Panc1 (cell line): ENCODE measurements at regions of chr9 and their contacts with region 1.

Region 1: GRCh38 chr9:109253703-109254284 is 67.1 kb downstream of the EPB41L4B start:
- DNase-seq: peak; percentile 69
- ATAC-seq: peak; percentile 82
- H3K4me3 ChIP-seq: no peak overlapping the region
- H3K27ac ChIP-seq: peak overlapping the region; percentile 93
- H3K4me1 ChIP-seq: peaks cover 64% of the 10 kb centered on the region
- H3K27me3 ChIP-seq: no peaks in the 10 kb centered on the region
- CTCF ChIP-seq: peak; percentile 32; the same call in 1 of the 2 replicates

Region 2: GRCh38 chr9:109108318-109108717 is 145.5 kb before region 1 on chr9:
- CTCF ChIA-PET with region 1: no interaction called
- POLR2A ChIA-PET with region 1: interaction called, 14 read pairs
- in situ Hi-C with region 1: no loop called
- intact Hi-C with region 1: no loop called
- DNase-seq: no peak
- ATAC-seq: peak; percentile 49; the same call in 1 of the 2 replicates
- H3K4me3 ChIP-seq: peak overlapping the region; percentile 14 to 29
- H3K27ac ChIP-seq: peak overlapping the region; percentile 95
- H3K4me1 ChIP-seq: peaks cover 29% of the 10 kb centered on the region
- H3K27me3 ChIP-seq: no peaks in the 10 kb centered on the region
- CTCF ChIP-seq: no peak

Region 3: DNA sequence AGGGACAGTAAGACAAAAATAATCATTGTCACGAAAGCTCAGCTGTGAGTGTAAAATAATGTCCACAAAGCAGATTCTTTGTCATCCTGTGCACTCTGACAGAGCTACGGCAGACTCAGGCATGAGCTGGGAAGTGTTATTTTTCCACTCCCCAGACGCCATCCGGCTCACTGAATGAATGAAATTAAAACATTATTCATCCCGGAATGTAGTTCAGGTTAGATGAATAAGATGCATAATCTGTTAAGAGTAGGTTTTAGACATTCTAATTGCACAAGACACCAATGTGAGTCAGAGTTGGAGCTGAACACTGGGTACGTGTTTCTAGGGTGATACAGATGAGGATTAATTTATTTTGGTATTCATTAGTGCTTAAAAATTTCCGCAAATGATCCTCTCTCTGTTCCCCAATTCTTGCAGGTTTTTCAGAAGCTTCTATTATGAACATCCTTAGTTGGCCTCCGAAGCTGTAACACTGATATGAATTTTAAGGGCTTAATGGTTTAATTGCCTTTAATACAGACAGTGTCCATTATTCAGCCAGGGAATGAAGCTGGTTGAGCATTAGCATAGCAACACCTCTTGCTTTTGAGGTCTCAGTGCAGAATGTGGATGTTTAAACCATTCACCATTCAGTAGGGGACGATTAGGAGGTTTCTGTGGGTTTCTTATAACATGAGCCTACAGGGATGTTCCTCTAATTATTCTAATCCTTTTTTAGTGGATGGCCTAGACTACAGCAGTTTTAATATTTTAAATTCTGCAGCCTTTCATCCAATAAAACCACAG is 21.2 kb before region 1 on chr9:
- CTCF ChIA-PET with region 1: no interaction called
- POLR2A ChIA-PET with region 1: no interaction called
- in situ Hi-C with region 1: no loop called
- intact Hi-C with region 1: no loop called
- DNase-seq: no peak
- ATAC-seq: no peak
- H3K4me3 ChIP-seq: no peak overlapping the region
- H3K27ac ChIP-seq: no peak overlapping the region
- H3K4me1 ChIP-seq: no peaks in the 10 kb centered on the region
- H3K27me3 ChIP-seq: no peaks in the 10 kb centered on the region
- CTCF ChIP-seq: no peak